HCT116 (cell line): ENCODE measurements at regions of chr5 and their contacts with region 1.

Region 1: GRCh38 chr5:101143526-101143925 is 240.4 kb upstream of the ST8SIA4 start:
- DNase-seq: no peak
- ATAC-seq: no peak
- H3K4me3 ChIP-seq: no peak overlapping the region
- H3K27ac ChIP-seq: no peak overlapping the region
- H3K4me1 ChIP-seq: no peaks in the 10 kb centered on the region
- H3K27me3 ChIP-seq: no peaks in the 10 kb centered on the region
- CTCF ChIP-seq: no peak
- POLR2A ChIP-seq: no peak
- RAD21 ChIP-seq: no peak

Region 2: GRCh38 chr5:100654895-100655294 is 488.6 kb before region 1 on chr5:
- CTCF ChIA-PET with region 1: no interaction called
- POLR2A ChIA-PET with region 1: no interaction called
- RAD21 ChIA-PET with region 1: no interaction called
- intact Hi-C with region 1: no loop called
- DNase-seq: no peak
- ATAC-seq: no peak
- H3K4me3 ChIP-seq: no peak overlapping the region
- H3K27ac ChIP-seq: no peak overlapping the region
- H3K4me1 ChIP-seq: no peaks in the 10 kb centered on the region
- H3K27me3 ChIP-seq: no peaks in the 10 kb centered on the region
- CTCF ChIP-seq: no peak
- POLR2A ChIP-seq: no peak
- RAD21 ChIP-seq: no peak

Region 3: DNA sequence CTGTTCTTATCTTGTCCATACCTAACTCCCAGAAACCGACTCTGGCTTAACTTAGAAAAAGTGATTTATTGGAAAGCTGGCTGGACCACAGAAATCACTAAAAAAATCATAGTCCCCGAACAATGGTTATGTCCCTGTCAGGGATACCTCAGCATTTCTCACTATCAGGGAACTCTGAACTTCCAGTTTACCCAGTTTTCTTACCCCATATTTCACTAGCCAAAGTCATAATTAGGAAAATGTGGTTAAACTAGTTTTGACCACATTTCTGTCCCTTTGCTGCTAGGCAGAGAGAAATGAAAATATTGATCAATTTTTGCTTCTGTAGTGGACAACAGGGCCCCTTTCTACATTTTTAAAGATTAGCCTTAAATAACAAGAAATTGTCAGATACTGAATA is 278.6 kb before region 1 on chr5:
- CTCF ChIA-PET with region 1: no interaction called
- POLR2A ChIA-PET with region 1: no interaction called
- RAD21 ChIA-PET with region 1: no interaction called
- intact Hi-C with region 1: no loop called
- DNase-seq: no peak
- ATAC-seq: no peak
- H3K4me3 ChIP-seq: no peak overlapping the region
- H3K27ac ChIP-seq: no peak overlapping the region
- H3K4me1 ChIP-seq: no peaks in the 10 kb centered on the region
- H3K27me3 ChIP-seq: no peaks in the 10 kb centered on the region
- CTCF ChIP-seq: no peak
- POLR2A ChIP-seq: no peak
- RAD21 ChIP-seq: no peak

Region 4: GRCh38 chr5:100939981-100940380 is 203.5 kb before region 1 on chr5:
- CTCF ChIA-PET with region 1: no interaction called
- POLR2A ChIA-PET with region 1: no interaction called
- RAD21 ChIA-PET with region 1: no interaction called
- intact Hi-C with region 1: loop called (anchors 10 kb)
- DNase-seq: no peak
- ATAC-seq: no peak
- H3K4me3 ChIP-seq: no peak overlapping the region
- H3K27ac ChIP-seq: no peak overlapping the region
- H3K4me1 ChIP-seq: no peaks in the 10 kb centered on the region
- H3K27me3 ChIP-seq: no peaks in the 10 kb centered on the region
- CTCF ChIP-seq: no peak
- POLR2A ChIP-seq: no peak
- RAD21 ChIP-seq: no peak